Sigmoid colon (tissue), 7 donors: ENCODE measurements at regions of chr11 and their contacts with region 1.

Region 1: DNA sequence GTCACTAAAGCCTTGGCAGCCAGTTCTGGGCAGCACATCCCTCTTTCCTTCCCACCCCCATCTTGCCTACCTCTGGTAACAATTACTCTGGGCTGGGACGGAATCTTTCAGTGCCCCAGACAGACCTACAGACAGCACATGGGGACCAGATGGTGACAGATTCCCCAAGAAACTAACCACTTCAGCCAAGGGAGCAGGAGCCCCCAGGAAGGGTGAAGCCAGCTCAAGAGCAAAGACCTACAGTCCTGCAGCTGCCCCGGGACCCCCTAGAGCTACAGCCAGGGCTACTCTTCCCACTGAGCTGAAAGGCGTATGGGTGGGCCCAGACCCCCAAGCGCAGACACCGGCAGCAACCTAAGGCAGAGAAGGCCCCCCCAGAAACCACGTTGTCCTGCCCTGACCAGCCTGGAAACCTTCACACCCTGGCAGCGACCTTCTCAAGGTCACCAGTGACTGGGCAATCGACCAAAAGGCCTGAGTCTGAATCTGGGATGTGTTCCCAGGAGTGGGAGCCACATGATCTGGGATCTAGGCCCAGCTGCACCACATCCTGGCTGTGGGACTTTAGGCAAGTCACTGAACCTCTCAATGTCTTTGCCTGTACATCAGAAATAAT is 65.8 kb downstream of the LRRC32 start:
- DNase-seq: peak; percentile 91
- H3K4me3 ChIP-seq: no peak overlapping the region
- H3K27ac ChIP-seq: peak overlapping the region; percentile 8 to 70 (median 64)
- H3K4me1 ChIP-seq: peaks cover 0 to 58% (median 51%) of the 10 kb centered on the region in 4 donors
- H3K27me3 ChIP-seq: no peaks in the 10 kb centered on the region
- CTCF ChIP-seq: no peak
- EP300 ChIP-seq: no peak
- POLR2A ChIP-seq: no peak

Region 2: GRCh38 chr11:76654298-76654851 is 49.6 kb after region 1 on chr11:
- intact Hi-C with region 1: loop called (anchors 5 kb)
- DNase-seq: peak; percentile 91
- H3K4me3 ChIP-seq: no peak overlapping the region
- H3K27ac ChIP-seq: peak overlapping the region; percentile 48 to 73 (median 67)
- H3K4me1 ChIP-seq: peaks cover 0 to 42% (median 37%) of the 10 kb centered on the region in 4 donors
- H3K27me3 ChIP-seq: no peaks in the 10 kb centered on the region
- CTCF ChIP-seq: no peak
- EP300 ChIP-seq: no peak
- POLR2A ChIP-seq: no peak